ENCODE measurements at regions of chr14 and their contacts with region 1.

Region 1: DNA sequence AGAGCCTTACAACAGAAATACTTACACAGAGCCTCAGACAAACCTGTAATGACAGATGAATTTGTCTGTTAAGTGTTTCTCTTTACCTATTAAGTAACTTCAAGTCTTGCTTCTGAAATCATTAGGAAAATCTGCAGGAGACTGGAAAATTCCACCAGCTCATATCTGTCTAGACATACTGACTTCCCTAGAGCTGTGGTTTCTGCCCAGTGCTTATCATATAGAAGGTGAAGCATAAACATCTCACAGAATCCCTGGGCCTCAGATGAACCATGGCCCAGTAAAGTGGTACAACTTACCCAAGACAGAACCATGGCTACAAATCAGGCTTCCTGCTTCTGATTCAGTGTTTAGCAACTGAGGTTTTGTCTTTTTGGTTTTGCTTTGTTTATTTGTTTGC is 91.6 kb downstream of the EGLN3 start:
- DNase-seq: no peak
- H3K4me3 ChIP-seq: no peak overlapping the region
- H3K27me3 ChIP-seq: no peaks in the 10 kb centered on the region; the same call in 1 of the 2 replicates
- CTCF ChIP-seq: no peak

Region 2: DNA sequence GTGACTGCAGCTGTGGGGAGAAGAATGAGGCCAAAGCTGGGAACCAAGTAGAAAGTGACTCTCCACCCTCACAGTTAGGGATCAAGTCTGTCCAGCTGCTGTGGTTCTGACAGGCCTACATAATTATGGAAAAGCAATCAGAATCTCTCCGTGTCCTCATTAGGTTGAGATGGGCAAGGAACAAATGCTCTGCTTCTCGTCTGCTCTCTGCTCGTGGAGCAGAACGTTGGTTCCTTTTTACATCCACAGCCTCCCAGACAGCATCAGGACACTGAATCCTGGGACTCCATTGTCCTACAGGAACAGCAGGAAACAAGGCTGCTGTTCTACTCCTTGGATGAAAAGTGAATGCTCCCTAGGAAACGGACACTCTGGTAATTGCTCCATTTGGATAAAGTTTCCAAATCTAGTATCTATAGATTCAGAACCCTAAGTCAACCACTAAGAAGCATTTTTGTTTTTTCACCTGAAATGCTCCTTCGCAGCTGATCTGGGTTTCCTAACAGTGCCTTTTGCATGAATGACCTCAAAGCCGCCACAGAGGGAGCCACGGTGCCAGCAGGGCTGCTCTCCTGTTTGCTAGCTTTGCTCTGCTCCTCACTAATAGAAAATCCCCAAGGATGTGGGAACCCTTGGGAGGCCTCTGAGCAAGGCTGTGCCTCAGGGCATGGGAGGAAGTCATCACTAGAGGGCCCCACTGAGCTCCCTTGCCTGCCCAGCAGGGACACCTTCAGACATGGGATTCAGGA is 10.4 kb before region 1 on chr14:
- CTCF ChIA-PET with region 1: interaction called, 11 read pairs
- POLR2A ChIA-PET with region 1: no interaction called
- DNase-seq: no peak
- H3K4me3 ChIP-seq: no peak overlapping the region
- H3K27me3 ChIP-seq: peaks cover 4% of the 10 kb centered on the region; the same call in 1 of the 2 replicates
- CTCF ChIP-seq: peak; percentile 63

Region 3: DNA sequence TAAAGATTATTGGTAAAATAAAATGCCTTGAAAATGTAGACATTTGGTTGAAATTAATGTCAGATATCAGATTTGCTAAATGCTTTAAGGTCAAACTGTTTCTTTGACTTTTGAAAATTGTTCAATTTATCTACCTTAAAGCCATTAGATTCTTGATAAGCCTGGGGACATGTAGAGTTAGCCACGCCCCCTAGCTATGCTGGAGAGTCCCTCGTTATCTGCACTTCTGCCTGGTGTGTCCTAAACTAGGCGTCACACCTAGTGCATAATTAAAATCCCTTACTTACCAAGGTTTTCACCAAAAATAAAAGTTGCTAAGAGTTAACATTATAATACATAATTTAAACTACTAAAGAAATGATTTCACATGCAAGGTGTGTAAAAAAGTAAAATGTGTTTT is 12.1 kb after region 1 on chr14:
- CTCF ChIA-PET with region 1: no interaction called
- POLR2A ChIA-PET with region 1: interaction called, 20 read pairs
- DNase-seq: no peak
- H3K4me3 ChIP-seq: no peak overlapping the region
- H3K27me3 ChIP-seq: no peaks in the 10 kb centered on the region
- CTCF ChIP-seq: no peak

Region 4: DNA sequence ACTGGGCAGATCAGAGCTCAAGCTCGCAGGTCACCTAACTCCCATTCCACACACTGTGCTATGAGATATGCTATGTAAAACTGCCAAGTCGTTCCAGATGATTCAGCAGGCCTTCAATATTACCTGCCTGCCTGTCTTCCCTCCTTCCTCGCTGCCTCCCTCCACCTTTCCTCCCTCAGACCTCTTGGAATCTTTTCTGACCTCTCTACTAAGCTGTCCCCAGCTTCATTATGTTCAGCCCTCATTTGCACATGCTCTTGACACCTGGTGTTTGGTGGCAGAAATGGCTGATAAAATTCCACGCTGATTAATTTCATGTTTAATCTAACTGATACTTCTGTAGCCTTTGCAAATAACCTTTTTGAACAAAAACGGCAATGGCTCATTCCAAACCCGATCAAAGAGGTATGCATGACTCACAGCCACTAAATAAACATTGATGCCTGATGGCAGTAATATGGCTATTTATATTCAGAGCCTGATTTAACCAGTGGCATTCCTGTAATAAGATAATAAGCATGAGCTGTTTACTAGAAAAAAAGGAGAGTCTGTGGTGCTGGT is 222.3 kb after region 1 on chr14:
- CTCF ChIA-PET with region 1: no interaction called
- POLR2A ChIA-PET with region 1: no interaction called
- DNase-seq: no peak
- H3K4me3 ChIP-seq: no peak overlapping the region
- H3K27me3 ChIP-seq: peaks cover 5% of the 10 kb centered on the region; the same call in 1 of the 2 replicates
- CTCF ChIP-seq: no peak

Measured in BJ (cell line).